ENCODE measurements at regions of chr7 and their contacts with region 1.

Region 1: DNA sequence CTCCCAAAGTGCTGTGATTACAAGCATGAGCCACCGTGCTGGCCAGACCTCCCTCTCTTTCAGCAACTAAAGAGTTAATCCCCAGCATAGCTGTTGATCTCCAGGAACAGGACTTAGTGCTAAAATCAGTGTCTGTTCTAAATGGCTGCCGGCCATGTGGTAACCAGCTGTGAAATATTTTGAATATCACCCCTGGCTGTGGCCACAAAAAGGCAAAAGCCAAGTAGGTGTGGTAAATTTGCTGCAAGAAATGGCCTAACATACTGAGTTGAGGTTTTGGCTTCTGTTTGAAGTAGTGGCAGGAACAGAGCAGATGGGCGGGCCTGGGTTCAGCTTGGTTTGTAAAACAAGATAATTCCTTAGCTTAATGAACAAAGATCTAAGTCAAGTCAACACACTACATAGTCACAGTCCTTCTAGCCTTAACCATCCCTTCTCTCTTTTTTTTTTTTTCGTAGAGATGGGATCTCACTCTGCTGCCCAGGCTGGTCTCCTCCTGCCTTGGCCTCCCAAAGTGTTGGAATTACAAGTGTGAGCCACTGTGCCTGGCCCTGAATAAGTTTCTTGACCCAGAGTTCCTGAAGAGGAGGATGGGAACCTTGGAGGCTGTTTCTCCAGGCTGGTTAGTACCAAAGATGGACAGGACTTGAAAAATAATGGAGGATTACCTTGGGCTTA is 22.7 kb upstream of the AGFG2 start:
- DNase-seq: peak in 7 of 9 donors; percentile 34 to 70 (median 55)
- ATAC-seq: peak; percentile 89
- H3K4me3 ChIP-seq: peak overlapping the region; percentile 41
- H3K4me3 Mint-ChIP-seq: peak overlapping the region; percentile 51 to 79 (median 74)
- H3K27ac ChIP-seq: peak overlapping the region; percentile 52
- H3K27ac Mint-ChIP-seq: peak overlapping the region; percentile 38 to 92 (median 81)
- H3K4me1 ChIP-seq: peaks cover 23 to 29% of the 10 kb centered on the region in 2 donors
- H3K4me1 Mint-ChIP-seq: peaks cover 23 to 55% (median 33%) of the 10 kb centered on the region in 7 donors
- H3K27me3 ChIP-seq: no peaks in the 10 kb centered on the region
- H3K27me3 Mint-ChIP-seq: peaks cover 0 to 3% (median 0%) of the 10 kb centered on the region in 5 donors

Region 2: DNA sequence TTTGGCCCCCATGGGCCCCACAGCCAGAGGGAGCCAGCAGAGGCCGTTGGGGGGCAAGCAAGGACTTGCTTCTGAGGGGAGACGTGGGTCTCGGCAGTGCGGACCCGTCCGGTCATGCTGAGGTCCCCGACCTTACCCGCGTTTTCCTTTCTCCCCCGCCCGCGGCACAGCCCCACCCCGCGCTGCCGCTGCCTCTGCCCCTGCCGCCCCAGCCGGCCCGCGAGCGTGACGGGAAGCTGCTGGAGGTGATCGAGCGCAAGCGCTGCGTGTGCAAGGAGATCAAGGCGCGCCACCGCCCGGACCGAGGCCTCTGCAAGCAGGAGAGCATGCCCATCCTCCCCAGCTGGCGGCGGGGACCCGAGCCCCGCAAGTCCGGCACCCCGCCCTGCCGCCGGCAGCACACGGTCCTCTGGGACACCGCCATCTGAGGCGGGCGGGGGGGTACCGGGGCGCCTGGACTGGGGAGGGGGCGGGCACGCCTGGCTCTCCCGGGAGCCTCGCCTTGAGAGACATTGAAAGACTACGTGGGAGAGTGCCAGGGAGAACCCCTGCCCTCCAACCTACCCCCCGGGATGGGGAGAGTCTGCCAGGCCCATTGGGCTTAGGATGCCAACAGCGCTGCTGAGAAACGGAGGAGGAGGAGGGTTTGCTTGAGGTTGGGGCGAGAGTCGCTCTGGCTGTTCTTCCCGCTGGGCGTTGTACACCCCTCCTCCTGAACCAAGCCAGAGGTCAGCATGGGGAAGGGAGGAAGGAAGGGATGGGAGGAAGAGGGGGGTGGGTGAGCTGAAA is 22.6 kb before region 1 on chr7:
- CTCF ChIA-PET with region 1: interaction called, 3 read pairs
- POLR2A ChIA-PET with region 1: interaction called, 3 read pairs
- intact Hi-C with region 1: loop called in 1 of 2 experiments (anchors 1 kb)
- DNase-seq: peak in 8 of 9 donors; percentile 45 to 65 (median 56)
- ATAC-seq: peak; percentile 81
- H3K4me3 ChIP-seq: peak overlapping the region; percentile 53
- H3K4me3 Mint-ChIP-seq: peak overlapping the region; percentile 72 to 85 (median 80)
- H3K27ac ChIP-seq: peak overlapping the region; percentile 45
- H3K27ac Mint-ChIP-seq: peak overlapping the region; percentile 20 to 84 (median 67)
- H3K4me1 ChIP-seq: peaks cover 0 to 8% of the 10 kb centered on the region in 2 donors
- H3K4me1 Mint-ChIP-seq: peaks cover 8 to 26% (median 21%) of the 10 kb centered on the region in 7 donors
- H3K27me3 ChIP-seq: no peaks in the 10 kb centered on the region
- H3K27me3 Mint-ChIP-seq: peaks cover 0 to 26% (median 0%) of the 10 kb centered on the region in 5 donors

Region 3: GRCh38 chr7:100573691-100574361 is 57.6 kb after region 1 on chr7 and contains the start of gene SAP25:
- CTCF ChIA-PET with region 1: no interaction called
- POLR2A ChIA-PET with region 1: no interaction called
- intact Hi-C with region 1: no loop called
- DNase-seq: no peak
- ATAC-seq: no peak
- H3K4me3 ChIP-seq: no peak within 1 kb of the TSS
- H3K4me3 Mint-ChIP-seq: no peak within 1 kb of the TSS
- H3K27ac ChIP-seq: no peak within 1 kb of the TSS
- H3K27ac Mint-ChIP-seq: no peak within 1 kb of the TSS
- H3K4me1 ChIP-seq: peaks cover 18 to 24% of the 10 kb centered on the region in 2 donors
- H3K4me1 Mint-ChIP-seq: peaks cover 6 to 30% (median 16%) of the 10 kb centered on the region in 7 donors
- H3K27me3 ChIP-seq: no peaks in the 10 kb centered on the region
- H3K27me3 Mint-ChIP-seq: peaks cover 0 to 4% (median 0%) of the 10 kb centered on the region in 5 donors
- total RNA-seq, gene SAP25: 29.1 to 174 (median 71.3) TPM